ENCODE measurements at regions of chrX and their contacts with region 1.

Region 1: DNA sequence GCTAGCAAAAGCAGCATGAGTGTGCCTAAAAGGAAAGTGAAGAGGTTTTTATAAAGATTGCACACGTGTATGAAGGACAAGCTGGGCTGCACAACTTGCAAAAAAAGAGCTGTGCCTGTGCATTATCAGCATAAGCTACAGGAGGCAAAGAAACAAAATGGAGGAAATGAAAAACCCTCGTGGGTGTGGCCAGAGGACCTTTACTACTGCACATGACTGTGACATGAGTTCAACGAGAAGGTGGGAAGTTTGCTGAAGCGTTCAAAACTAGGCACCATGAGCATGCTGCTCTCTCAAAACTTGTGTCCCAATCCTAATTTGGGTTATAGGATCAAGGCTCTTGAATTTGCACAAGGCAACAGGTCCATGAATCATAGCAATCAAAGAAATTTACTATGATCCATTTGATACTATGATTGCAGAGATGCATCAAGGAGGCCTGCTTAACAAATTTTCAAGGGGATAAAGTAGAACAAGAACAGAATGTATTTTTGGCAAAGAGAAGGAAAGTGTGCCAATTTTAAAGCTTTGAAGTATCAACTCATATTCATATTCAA is 38.1 kb upstream of the CXorf38 start:
- DNase-seq: no peak
- ATAC-seq: no peak
- H3K4me3 ChIP-seq: no peak overlapping the region
- H3K27ac ChIP-seq: no peak overlapping the region
- H3K4me1 ChIP-seq: no peaks in the 10 kb centered on the region
- H3K27me3 ChIP-seq: no peaks in the 10 kb centered on the region
- CTCF ChIP-seq: no peak
- EP300 ChIP-seq: no peak
- POLR2A ChIP-seq: no peak
- RAD21 ChIP-seq: no peak

Region 2: GRCh38 chrX:40671126-40671525 is 14.3 kb before region 1 on chrX:
- CTCF ChIA-PET with region 1: no interaction called
- POLR2A ChIA-PET with region 1: interaction called, 4 read pairs
- in situ Hi-C with region 1: no loop called
- intact Hi-C with region 1: loop called (anchors 1 kb)
- DNase-seq: no peak
- ATAC-seq: no peak
- H3K4me3 ChIP-seq: no peak overlapping the region
- H3K27ac ChIP-seq: no peak overlapping the region
- H3K4me1 ChIP-seq: no peaks in the 10 kb centered on the region
- H3K27me3 ChIP-seq: no peaks in the 10 kb centered on the region
- CTCF ChIP-seq: no peak
- EP300 ChIP-seq: no peak
- POLR2A ChIP-seq: no peak
- RAD21 ChIP-seq: no peak

Region 3: DNA sequence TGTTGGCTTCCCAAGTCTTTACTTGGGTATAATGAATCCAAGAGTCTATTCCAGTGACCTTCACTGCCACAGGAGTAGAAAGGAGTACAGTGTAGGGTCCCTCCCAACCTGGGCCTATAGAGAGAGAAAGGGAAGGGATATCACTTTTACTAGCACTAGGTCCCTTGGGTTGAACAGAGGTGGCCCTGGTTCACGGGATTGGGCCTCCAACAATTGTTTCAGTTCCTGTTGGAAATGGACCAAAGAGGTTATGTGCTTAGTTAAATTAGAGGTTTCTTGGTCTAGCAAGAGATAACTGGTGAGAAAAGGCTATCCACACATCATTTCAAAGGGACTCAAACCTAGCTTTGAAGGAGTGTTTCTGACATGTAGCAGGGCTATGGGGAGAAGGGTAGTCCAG is 107.0 kb after region 1 on chrX:
- CTCF ChIA-PET with region 1: no interaction called
- POLR2A ChIA-PET with region 1: no interaction called
- in situ Hi-C with region 1: no loop called
- intact Hi-C with region 1: no loop called
- DNase-seq: no peak
- ATAC-seq: no peak
- H3K4me3 ChIP-seq: no peak overlapping the region
- H3K27ac ChIP-seq: no peak overlapping the region
- H3K4me1 ChIP-seq: peaks cover 0 to 4% of the 10 kb centered on the region in 2 experiments; a peak in 2 of 5 replicates
- H3K27me3 ChIP-seq: no peaks in the 10 kb centered on the region
- CTCF ChIP-seq: no peak
- EP300 ChIP-seq: no peak
- POLR2A ChIP-seq: no peak
- RAD21 ChIP-seq: no peak

Region 4: GRCh38 chrX:41634284-41634683 is 948.8 kb after region 1 on chrX:
- CTCF ChIA-PET with region 1: no interaction called
- POLR2A ChIA-PET with region 1: no interaction called
- in situ Hi-C with region 1: no loop called
- intact Hi-C with region 1: no loop called
- DNase-seq: peak in 3 of 4 experiments; percentile 4 to 62 (median 26)
- ATAC-seq: peak; percentile 78
- H3K4me3 ChIP-seq: no peak overlapping the region
- H3K27ac ChIP-seq: no peak overlapping the region; the same call in 2 of the 3 replicates
- H3K4me1 ChIP-seq: peaks cover 0 to 2% of the 10 kb centered on the region in 2 experiments; a peak in 1 of 5 replicates
- H3K27me3 ChIP-seq: no peaks in the 10 kb centered on the region
- CTCF ChIP-seq: no peak
- EP300 ChIP-seq: peak; percentile 23; the same call in 1 of the 2 replicates
- POLR2A ChIP-seq: no peak
- RAD21 ChIP-seq: no peak